ENCODE measurements at regions of chr1 and their contacts with region 1.

Region 1: DNA sequence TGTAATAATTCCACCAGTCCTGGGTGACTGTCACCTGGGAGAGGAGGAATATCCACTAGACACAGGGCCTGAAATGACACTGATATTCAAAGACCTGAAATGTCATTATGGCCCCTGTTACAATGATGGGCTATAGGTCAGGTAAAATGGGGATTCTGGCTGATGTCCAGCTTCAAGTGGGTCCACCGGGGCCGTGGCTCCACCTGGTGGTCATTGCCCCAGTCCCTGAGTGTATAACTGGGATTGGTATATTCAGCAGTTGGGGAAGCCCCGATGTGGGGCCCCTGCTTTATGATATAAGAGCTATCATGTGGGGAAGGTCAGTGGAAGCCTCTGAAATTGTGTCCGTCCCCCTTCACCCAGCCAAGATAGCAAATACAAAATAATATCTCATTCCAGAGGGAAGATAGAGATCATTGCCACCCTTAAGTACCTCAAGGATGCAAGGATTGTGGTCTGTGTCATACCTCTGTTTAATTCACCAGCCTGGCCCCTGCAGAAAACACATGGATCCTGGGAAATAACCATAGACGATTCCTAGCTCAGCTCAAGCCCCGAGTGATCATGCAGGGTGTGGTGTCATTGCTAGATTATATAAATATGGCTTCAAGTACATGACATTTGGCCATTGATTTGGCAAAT is 19.4 kb downstream of the PLEKHO1 start:
- DNase-seq: peak; percentile 62 to 79
- ATAC-seq: peak; percentile 75 to 89 (median 81)
- H3K4me3 ChIP-seq: no peak overlapping the region
- H3K27ac ChIP-seq: no peak overlapping the region
- H3K4me1 ChIP-seq: no peaks in the 10 kb centered on the region
- H3K27me3 ChIP-seq: no peaks in the 10 kb centered on the region
- CTCF ChIP-seq: peak; percentile 87

Region 2: GRCh38 chr1:149962123-149962548 is 206.9 kb before region 1 on chr1:
- intact Hi-C with region 1: loop called (anchors 2 to 5 kb)
- DNase-seq: no peak
- ATAC-seq: peak; percentile 84 to 91 (median 88)
- H3K4me3 ChIP-seq: no peak overlapping the region
- H3K27ac ChIP-seq: peak overlapping the region; percentile 42
- H3K4me1 ChIP-seq: no peaks in the 10 kb centered on the region
- H3K27me3 ChIP-seq: no peaks in the 10 kb centered on the region
- CTCF ChIP-seq: peak; percentile 83

Region 3: DNA sequence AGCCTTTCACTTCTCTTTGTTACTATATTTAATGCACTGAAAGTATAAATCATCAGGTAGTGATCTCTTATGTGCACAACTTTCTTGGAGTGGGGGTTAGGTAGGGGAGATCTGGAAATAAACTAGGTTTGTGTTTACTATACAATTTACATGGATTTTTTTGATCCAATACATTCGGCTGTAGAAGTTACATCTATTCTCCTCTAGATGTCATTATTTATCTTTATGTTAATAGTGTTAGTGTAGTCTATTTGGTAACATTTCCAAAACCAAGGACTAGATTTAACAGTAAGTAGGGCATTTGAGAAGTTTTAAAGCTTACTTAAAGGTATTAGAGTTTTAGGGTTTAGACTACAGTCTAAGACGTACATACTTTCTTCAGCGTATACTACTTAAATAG is 96.1 kb before region 1 on chr1:
- intact Hi-C with region 1: loop called (anchors 2 kb)
- DNase-seq: no peak
- ATAC-seq: peak; percentile 37 to 81 (median 60)
- H3K4me3 ChIP-seq: no peak overlapping the region
- H3K27ac ChIP-seq: no peak overlapping the region
- H3K4me1 ChIP-seq: peaks cover 4% of the 10 kb centered on the region
- H3K27me3 ChIP-seq: no peaks in the 10 kb centered on the region
- CTCF ChIP-seq: peak; percentile 52

Region 4: DNA sequence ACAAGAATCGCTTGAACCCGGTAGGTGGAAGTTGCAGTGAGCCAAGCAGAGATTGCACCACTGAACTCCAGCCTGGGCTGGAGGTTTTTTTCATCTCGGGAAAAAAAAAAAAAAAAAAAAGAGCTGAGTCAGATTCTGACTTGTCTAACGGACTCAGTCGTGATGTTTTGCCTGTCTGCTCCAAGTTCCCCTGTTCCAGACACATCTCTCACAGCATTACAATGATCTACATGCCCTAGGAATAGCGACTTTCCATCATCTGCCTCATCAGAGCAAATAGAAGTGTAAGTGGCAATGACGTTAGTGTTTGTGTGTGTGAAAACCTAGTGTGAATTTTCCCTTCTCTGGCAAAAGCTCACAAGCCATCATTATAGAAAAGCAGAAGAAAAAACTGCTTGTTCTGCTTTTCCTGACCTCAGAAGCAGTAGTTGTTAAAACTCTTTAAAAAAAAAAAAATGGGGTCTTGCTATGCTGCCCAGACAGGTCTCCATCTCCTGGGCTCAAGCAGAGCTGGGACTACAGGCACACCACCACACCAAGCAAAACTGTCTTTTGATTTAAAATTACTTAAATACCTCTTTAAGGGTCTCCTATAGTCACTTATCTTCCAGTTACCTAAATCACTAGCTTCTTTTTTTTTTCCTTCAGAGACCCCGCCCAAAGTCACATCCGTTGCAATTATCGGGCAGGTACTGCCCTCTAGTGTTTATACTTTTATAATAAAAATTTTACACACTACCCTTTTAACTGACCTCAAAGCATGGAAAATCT is 17.9 kb after region 1 on chr1:
- intact Hi-C with region 1: no loop called
- DNase-seq: no peak
- ATAC-seq: peak; percentile 34 to 73 (median 44)
- H3K4me3 ChIP-seq: no peak overlapping the region
- H3K27ac ChIP-seq: no peak overlapping the region
- H3K4me1 ChIP-seq: no peaks in the 10 kb centered on the region
- H3K27me3 ChIP-seq: no peaks in the 10 kb centered on the region
- CTCF ChIP-seq: peak; percentile 55

Measured in psoas muscle (tissue), 8 donors.